ENCODE measurements at regions of chr1 and their contacts with region 1.

Region 1: DNA sequence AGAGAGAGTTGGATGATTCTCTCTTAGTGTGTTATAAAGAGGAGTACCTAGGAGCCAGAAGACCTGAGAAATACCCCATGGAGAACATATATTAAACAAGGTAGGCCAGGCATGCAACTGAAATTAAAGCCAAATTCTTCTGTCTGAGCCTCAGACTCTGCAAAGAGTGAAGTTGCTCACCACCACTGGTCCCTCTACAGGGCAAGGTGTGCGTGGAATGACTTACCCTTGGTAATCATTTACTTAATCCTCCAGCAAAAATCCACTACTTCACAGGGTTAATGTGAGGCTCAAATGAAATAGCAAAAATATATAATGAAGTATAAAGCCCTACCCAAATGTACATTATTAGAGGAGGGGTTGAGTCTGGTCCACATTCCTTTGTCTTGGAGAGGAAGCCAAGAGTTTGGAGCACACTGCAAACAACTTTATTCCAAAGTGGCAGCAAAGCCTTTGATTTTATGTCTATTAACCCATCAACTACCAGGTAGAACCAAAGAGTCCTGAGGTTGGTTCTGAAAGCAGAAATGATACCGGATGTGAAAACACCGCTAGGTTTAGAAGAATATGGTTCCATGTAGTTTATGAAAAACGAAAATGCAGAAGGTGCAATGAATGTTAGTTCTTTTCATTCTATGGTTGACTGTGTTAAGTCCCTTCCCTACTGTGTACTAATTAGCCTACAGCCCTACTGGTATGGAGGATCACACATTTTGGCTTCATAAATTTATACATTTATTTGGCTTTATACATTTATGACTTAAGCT is 8.5 kb downstream of the SSR2 start:
- DNase-seq: no peak
- H3K4me3 ChIP-seq: no peak overlapping the region
- CTCF ChIP-seq: no peak

Region 2: DNA sequence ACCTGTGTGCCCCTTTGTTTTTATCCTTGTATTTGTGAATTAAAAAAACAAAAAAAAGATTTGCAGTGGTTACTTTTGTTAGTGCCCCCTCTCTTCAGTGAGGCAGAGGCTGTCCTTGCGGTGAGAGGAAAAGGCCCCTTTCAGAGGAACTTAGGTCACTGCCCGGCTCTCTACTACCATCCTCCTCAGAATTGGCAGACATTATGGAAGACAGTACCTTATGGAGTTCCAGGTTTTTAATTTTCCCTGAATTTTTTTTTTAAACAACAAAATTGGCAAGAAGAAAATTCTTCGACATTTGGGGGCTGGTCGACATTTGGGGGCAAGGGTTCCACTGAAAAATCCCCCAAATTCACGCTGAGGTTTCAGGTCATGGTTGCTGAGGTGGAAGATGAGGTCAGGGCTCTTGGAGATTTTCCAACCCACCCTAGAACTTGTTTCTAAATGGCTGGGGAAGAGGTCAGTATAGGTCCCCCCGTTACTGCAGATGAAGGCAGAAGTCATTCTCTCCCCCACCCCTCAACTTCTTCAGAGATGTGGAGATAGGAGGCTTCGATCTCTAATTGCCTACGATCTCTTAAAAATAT is 65.5 kb before region 1 on chr1:
- in situ Hi-C with region 1: loop called (anchors 5 kb)
- DNase-seq: no peak
- H3K4me3 ChIP-seq: no peak overlapping the region
- CTCF ChIP-seq: no peak

Region 3: DNA sequence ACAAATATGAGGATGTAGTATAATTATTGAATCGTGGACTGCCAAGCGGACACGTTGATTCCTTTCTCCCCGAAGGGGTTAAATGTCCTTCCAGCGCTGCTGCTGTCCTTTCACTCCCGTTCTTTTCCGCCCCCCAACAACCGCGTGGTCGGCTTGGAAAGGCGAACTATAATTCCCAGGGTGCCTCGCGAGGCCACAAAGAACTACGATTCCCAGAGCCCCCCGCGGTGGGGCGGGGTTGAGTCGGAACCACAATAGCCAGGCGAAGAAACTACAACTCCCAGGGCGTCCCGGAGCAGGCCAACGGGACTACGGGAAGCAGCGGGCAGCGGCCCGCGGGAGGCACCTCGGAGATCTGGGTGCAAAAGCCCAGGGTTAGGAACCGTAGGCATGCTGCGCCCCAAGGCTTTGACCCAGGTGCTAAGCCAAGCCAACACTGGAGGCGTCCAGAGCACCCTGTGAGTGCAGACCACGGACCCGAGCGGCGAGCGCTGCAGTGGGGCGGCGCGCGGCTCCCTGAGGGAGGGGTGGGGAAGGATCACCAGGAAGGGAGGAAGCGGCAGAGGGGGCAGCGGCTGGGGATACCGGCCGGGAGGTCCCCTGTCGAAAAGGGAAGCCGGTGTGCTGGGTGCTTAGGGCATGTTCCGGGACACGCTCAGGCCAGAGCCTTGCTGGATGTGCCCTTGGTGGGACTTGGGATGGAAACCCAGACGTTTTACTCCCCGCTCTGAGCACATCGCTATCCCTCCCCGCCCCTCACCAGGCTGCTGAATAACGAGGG is 42.5 kb after region 1 on chr1 and contains the start of gene LAMTOR2:
- in situ Hi-C with region 1: loop called (anchors 5 kb)
- DNase-seq: peak; percentile 85
- H3K4me3 ChIP-seq: peak within 1 kb of the TSS; percentile 98
- CTCF ChIP-seq: no peak

Measured in astrocyte of the cerebellum (primary cell).